ENCODE measurements at regions of chr20 and their contacts with region 1.

Region 1: DNA sequence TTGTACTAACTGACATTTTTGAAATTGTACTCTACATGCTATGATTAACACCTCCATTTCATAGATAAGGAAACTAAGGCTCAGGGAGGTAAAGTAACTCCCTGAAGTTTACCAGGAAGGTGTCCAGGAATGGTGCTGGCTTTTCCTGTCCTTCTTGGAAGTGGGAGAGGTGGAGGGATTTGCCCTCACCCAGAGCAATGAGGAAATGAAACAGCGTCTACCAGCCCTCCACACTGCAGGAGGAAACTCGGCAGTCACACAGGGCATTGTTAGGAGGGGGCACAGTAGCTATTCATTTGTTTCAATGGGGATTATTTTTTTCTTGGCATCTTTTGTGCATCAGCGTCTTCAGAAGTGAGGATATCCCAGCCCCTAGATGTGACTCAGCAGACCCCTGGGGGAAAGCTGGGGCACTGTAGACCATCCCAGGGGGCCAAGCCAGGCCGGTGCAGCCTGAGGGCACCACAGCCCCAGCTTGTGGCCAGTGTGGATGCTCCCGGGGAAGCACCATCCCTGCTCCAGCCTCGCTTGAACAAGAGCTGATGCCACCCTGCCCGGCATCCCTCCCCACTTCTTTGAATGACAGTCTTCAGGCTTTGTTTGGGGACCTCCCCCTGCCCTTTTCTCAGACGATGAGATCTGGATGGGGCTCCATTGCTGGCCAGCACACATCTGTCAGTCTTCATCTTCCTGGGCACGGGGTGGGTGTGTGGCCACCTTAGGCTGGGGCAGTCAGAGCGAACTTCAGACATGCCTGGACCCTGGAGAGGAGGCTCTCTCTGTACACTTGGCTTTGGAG is 224.4 kb upstream of the PMEPA1 start:
- DNase-seq: no peak
- H3K4me3 ChIP-seq: no peak overlapping the region
- H3K27ac ChIP-seq: no peak overlapping the region
- H3K4me1 ChIP-seq: no peaks in the 10 kb centered on the region
- H3K27me3 ChIP-seq: no peaks in the 10 kb centered on the region
- CTCF ChIP-seq: no peak

Region 2: DNA sequence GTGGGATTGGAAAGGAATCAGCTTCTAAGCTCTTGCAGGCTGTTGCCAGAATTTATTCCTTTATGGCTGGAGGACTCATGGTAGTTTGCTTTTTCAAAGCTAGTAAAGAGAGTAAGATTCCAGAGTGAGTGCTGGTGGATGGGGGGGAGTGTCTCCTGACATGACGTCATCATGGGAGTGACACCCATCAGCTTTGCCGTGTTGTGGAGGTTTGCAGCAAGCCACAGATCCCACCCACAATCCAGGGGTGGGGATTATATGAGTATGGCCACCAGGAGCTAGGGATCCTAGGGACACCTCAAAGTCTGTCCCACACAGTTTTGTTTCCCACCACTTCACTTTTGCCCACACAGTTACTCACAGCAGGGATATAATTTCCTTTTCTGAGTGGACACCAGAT is 195.7 kb before region 1 on chr20:
- CTCF ChIA-PET with region 1: no interaction called
- dilution Hi-C with region 1: loop called (anchors 5 kb)
- in situ Hi-C with region 1: no loop called
- intact Hi-C with region 1: no loop called
- DNase-seq: peak; percentile 8
- H3K4me3 ChIP-seq: no peak overlapping the region
- H3K27ac ChIP-seq: no peak overlapping the region
- H3K4me1 ChIP-seq: no peaks in the 10 kb centered on the region
- H3K27me3 ChIP-seq: no peaks in the 10 kb centered on the region
- CTCF ChIP-seq: no peak

Region 3: GRCh38 chr20:57879779-57880570 is 54.2 kb before region 1 on chr20:
- CTCF ChIA-PET with region 1: no interaction called
- dilution Hi-C with region 1: loop called (anchors 5 kb)
- in situ Hi-C with region 1: no loop called
- intact Hi-C with region 1: no loop called
- DNase-seq: no peak
- H3K4me3 ChIP-seq: no peak overlapping the region
- H3K27ac ChIP-seq: no peak overlapping the region
- H3K4me1 ChIP-seq: no peaks in the 10 kb centered on the region
- H3K27me3 ChIP-seq: peaks cover 8% of the 10 kb centered on the region
- CTCF ChIP-seq: no peak

Region 4: GRCh38 chr20:58150772-58151171 is 216.6 kb after region 1 on chr20:
- CTCF ChIA-PET with region 1: no interaction called
- dilution Hi-C with region 1: no loop called
- in situ Hi-C with region 1: no loop called
- intact Hi-C with region 1: no loop called
- DNase-seq: no peak
- H3K4me3 ChIP-seq: no peak overlapping the region
- H3K27ac ChIP-seq: no peak overlapping the region
- H3K4me1 ChIP-seq: peaks cover 6% of the 10 kb centered on the region
- H3K27me3 ChIP-seq: no peaks in the 10 kb centered on the region
- CTCF ChIP-seq: no peak

Measured in mammary epithelial cell (primary cell).